Activated naive CD4-positive, alpha-beta T cell treated with anti-CD3 and anti-CD28 coated beads for 36 hours (primary cell): ENCODE measurements at regions of chr17 and their contacts with region 1.

Region 1: DNA sequence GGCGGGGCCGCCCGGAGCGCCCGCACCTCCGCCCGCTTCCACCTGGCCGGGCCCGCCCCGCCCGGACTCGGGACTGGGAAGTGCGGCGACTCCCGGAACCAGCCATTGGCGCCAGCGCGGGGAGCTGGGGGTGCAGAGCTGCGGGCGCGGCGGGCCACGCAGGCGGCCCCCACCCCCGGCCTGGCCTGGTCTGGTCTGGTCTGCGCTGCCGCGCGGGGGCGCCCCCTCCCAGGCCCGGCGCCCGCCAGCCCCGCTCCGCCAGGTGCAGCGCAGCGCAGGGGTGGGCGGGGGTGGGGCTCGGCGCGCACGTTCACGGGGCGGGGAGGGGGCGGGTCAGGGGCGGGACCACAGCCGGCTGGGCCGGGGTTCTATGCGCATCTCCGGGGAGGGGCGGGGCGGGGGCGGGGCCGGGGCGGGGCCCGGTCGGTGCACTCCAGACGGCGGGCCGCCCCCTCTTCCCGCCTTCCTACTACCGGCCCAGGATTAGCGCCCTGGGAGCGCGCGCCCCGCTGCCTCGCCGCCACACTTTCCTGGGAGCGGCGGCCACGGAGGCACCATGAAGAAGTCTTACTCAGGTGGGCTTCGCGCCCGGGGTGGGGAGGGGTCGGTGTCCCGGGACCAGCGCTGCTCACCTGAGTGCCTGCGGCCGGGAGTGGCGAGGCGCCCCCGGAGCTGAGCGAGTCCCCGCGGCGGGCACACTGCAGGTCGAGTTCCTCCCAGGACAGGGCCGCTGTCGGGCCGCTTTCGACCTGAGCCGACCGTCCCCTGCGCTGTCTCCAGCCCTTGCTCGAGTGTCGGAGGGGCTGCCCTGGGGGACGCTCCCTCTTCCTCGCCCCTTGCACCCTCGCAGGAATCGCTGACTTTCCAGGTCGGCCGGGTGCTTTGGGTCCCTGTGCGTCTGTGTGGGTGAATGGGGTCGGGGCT is 140.5 kb downstream of the SEC14L1 start:
- DNase-seq: peak; percentile 62
- H3K4me3 Mint-ChIP-seq: peak overlapping the region; percentile 69
- H3K27ac Mint-ChIP-seq: peak overlapping the region; percentile 24
- H3K4me1 Mint-ChIP-seq: peaks cover 18% of the 10 kb centered on the region
- H3K27me3 Mint-ChIP-seq: peaks cover 17% of the 10 kb centered on the region

Region 2: DNA sequence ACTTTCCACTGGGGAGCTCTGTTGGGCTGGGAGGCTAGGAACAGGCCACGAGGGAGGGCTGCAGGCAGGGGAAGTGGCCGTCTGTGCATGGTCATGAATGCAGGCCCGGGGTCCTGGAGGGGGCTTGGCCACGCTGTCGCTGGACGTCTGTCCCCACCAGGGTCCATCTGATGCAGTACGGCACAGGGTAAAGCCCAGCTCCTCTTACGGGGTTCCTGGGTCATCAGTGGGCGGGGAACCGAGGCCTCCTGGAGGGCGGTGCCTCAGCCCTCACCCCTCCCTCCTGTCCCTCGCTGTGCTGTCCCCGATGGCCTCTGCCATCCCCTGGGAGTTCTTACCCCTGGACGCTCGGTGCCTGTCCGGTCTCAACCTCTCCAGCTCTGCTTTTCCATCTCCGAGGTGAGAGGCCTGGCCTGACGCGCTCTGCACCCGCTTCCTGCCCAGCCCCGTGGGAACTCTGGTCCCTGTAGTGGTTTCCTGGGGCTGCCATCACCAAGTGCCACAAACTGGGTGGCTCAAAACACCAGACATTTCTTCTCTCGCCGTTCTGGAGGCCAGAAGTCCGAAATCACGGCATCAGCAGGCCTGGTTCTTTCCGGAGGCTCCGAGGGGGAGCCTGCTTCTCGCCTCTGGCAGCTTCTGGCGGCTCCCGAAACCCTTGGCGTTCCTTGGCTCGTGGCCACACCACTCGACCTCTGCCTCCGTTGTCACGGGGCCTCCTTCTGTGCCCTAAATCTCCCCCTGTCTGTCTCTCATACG is 42.4 kb after region 1 on chr17:
- CTCF ChIA-PET with region 1: no interaction called
- intact Hi-C with region 1: loop called (anchors 2 kb)
- DNase-seq: peak; percentile 50
- H3K4me3 Mint-ChIP-seq: no peak overlapping the region
- H3K27ac Mint-ChIP-seq: no peak overlapping the region
- H3K4me1 Mint-ChIP-seq: peaks cover 63% of the 10 kb centered on the region
- H3K27me3 Mint-ChIP-seq: no peaks in the 10 kb centered on the region

Region 3: GRCh38 chr17:77372444-77373298 is 91.4 kb after region 1 on chr17:
- CTCF ChIA-PET with region 1: no interaction called
- intact Hi-C with region 1: loop called (anchors 5 kb)
- DNase-seq: peak; percentile 65
- H3K4me3 Mint-ChIP-seq: peak overlapping the region; percentile 67
- H3K27ac Mint-ChIP-seq: no peak overlapping the region
- H3K4me1 Mint-ChIP-seq: peaks cover 65% of the 10 kb centered on the region
- H3K27me3 Mint-ChIP-seq: no peaks in the 10 kb centered on the region

Region 4: DNA sequence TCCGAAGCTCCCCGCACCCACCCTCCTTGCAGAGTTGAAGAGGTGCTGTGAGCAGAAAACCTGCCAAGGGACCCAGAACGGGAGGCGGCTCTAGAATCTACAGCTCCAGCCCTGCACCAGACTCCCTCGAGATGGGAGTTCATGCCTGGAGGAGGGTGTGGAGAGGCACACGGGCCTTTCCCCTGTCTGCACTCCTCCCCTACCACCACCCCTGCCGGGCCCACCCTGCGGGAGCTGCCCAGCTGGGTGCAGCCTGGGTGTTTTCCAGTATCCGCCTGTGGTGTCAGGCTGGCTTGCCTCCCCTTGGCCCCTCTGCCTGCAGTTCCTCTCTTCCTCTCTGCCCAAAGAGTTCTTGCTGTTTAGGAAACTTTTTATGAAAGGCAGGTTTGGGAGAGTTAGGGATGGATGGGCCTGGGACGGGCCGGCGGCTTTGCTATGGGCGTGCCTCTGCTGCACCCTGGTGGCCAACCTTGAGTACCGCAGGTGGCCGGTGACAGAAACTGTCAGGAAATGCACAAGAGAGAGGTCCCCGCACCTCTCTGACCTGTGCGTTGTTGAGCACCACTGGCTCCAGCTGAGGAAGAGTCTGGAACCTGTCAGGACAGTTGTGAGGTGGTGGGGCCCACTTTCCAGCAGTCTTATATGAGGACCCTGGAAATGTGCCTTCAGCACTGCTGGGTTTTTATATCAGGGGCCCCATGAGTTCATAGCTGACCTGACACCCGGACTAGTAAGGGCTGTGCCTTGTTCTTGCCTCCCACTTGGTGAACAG is 213.6 kb after region 1 on chr17:
- CTCF ChIA-PET with region 1: no interaction called
- intact Hi-C with region 1: loop called (anchors 2 kb)
- DNase-seq: peak; percentile 81
- H3K4me3 Mint-ChIP-seq: no peak overlapping the region
- H3K27ac Mint-ChIP-seq: peak overlapping the region; percentile 77
- H3K4me1 Mint-ChIP-seq: peaks cover 11% of the 10 kb centered on the region
- H3K27me3 Mint-ChIP-seq: no peaks in the 10 kb centered on the region